B cell (primary cell): ENCODE measurements at regions of chr15 and their contacts with region 1.

Region 1: GRCh38 chr15:49046220-49047102 is at the start of gene SECISBP2L:
- DNase-seq: peak; percentile 96
- ATAC-seq: peak; percentile 96
- H3K4me3 ChIP-seq: peak within 1 kb of the TSS; percentile 78 to 98 (median 80)
- H3K4me3 Mint-ChIP-seq: peak within 1 kb of the TSS; percentile 95
- H3K27ac ChIP-seq: peak within 1 kb of the TSS; percentile 83 to 89
- H3K27ac Mint-ChIP-seq: peak within 1 kb of the TSS; percentile 98
- H3K4me1 ChIP-seq: peaks cover 12 to 19% of the 10 kb centered on the region in 2 donors
- H3K4me1 Mint-ChIP-seq: peaks cover 32% of the 10 kb centered on the region
- H3K27me3 ChIP-seq: no peaks in the 10 kb centered on the region
- H3K27me3 Mint-ChIP-seq: no peaks in the 10 kb centered on the region
- CTCF ChIP-seq: peak; percentile 45
- total RNA-seq, gene SECISBP2L: 117 and 121 TPM in 2 replicates

Region 2: DNA sequence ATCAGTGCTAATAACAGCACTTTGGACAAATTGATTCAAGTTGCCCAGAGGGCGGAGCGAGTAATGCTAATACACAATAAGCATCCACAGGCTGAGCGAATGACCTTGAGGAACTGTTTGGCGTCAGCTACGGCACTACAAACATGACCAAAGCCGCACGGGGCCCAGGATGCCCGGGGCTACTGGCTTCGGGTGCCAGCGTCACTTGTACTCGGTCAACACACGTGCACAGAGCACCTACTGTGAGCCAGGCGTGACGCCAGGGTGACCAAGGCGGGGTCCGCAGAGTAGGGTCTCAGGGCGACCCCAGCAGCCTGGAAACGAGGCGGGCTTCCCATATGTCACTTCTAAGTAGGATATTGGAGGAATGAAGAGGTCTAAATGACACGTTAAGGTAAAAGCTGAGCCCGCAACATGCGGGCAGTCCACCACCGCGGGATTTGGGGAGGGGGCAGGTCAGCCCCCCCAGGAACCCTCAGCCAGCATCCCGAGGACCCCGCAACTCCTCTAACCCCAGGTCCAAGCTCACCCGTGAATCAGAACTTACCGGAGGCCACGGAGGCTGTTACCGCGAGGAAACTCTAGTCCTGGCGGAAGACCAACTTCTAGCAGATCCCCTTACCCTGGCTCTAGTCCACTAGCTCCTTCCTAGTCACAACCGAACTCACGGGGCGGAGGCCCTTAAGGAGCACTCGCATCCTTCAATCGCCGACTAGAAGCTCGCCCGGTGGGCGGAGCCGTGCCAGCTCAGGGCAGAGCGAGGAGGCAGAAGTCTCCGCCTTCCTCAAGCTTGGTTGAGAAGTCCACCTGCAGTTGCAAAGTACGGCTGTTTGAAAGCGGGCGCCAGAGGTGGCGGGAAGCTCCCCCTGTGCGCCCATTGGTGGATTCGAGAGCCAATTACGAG is 235.8 kb before region 1 on chr15 and contains the start of gene CEP152:
- CTCF ChIA-PET with region 1: no interaction called
- POLR2A ChIA-PET with region 1: no interaction called
- intact Hi-C with region 1: loop called (anchors 1 kb)
- DNase-seq: peak; percentile 99
- ATAC-seq: peak; percentile 95
- H3K4me3 ChIP-seq: peak within 1 kb of the TSS; percentile 86 to 97 (median 94)
- H3K4me3 Mint-ChIP-seq: peak within 1 kb of the TSS; percentile 95
- H3K27ac ChIP-seq: peak within 1 kb of the TSS; percentile 74 to 76
- H3K27ac Mint-ChIP-seq: peak within 1 kb of the TSS; percentile 86
- H3K4me1 ChIP-seq: peaks cover 15 to 18% of the 10 kb centered on the region in 2 donors
- H3K4me1 Mint-ChIP-seq: peaks cover 30% of the 10 kb centered on the region
- H3K27me3 ChIP-seq: peaks cover 0 to 7% (median 0%) of the 10 kb centered on the region in 4 experiments
- H3K27me3 Mint-ChIP-seq: peaks cover 4% of the 10 kb centered on the region
- CTCF ChIP-seq: no peak
- total RNA-seq, gene CEP152: 18.0 and 18.1 TPM in 2 replicates

Region 3: DNA sequence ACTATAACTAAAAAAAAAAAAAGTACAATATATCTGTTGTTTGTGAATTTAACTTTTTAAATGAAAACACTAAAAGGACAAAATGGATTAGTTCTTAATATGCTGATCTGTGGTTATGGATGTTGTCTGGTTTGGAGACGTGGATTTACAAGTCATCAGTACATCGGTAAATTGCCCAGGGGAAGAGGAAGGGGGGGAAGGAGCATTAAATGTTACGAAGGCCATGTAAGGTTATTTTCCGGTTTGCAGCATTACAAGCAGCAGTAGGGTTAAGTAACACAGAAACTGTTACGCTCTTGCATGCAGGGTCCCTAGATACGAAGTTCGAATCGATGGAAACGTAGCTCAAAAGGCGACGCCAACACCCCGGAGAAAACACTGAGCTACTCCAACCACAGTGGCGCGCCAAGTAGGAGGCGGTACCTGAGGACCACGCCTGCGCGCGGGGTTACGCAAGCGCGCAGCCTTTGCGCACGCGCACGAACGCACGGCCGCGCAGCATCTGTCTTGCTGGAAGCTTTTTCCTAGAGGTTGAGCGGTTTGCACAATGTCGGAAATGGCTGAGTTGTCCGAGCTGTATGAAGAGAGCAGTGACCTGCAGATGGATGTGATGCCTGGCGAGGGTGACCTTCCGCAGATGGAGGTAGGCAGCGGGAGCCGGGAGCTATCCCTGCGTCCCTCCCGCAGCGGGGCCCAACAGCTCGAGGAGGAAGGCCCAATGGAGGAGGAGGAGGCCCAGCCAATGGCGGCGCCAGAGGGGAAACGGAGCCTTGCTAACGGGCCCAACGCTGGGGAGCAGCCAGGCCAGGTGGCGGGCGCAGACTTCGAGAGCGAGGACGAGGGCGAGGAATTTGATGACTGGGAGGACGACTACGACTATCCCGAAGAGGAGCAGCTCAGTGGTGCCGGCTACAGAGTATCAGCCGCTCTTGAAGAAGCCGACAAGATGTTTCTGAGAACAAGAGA is 168.5 kb before region 1 on chr15 and contains the start of gene EID1:
- CTCF ChIA-PET with region 1: interaction called, 4 read pairs
- POLR2A ChIA-PET with region 1: interaction called, 3 read pairs
- intact Hi-C with region 1: loop called (anchors 1 kb)
- DNase-seq: peak; percentile 95
- ATAC-seq: peak; percentile 95
- H3K4me3 ChIP-seq: peak within 1 kb of the TSS; percentile 56 to 91 (median 82)
- H3K4me3 Mint-ChIP-seq: peak within 1 kb of the TSS; percentile 100
- H3K27ac ChIP-seq: peak within 1 kb of the TSS; percentile 79 to 83
- H3K27ac Mint-ChIP-seq: peak within 1 kb of the TSS; percentile 99
- H3K4me1 ChIP-seq: peaks cover 0 to 12% of the 10 kb centered on the region in 2 donors
- H3K4me1 Mint-ChIP-seq: peaks cover 25% of the 10 kb centered on the region
- H3K27me3 ChIP-seq: peaks cover 0 to 4% (median 1%) of the 10 kb centered on the region in 4 experiments
- H3K27me3 Mint-ChIP-seq: peaks cover 8% of the 10 kb centered on the region
- CTCF ChIP-seq: no peak
- total RNA-seq, gene EID1: 56.5 and 62.7 TPM in 2 replicates

Region 4: GRCh38 chr15:49024840-49025239 is 21.6 kb before region 1 on chr15:
- CTCF ChIA-PET with region 1: no interaction called
- POLR2A ChIA-PET with region 1: no interaction called
- intact Hi-C with region 1: no loop called
- DNase-seq: no peak
- ATAC-seq: no peak
- H3K4me3 ChIP-seq: no peak overlapping the region
- H3K4me3 Mint-ChIP-seq: no peak overlapping the region
- H3K27ac ChIP-seq: no peak overlapping the region
- H3K27ac Mint-ChIP-seq: no peak overlapping the region
- H3K4me1 ChIP-seq: no peaks in the 10 kb centered on the region
- H3K4me1 Mint-ChIP-seq: no peaks in the 10 kb centered on the region
- H3K27me3 ChIP-seq: no peaks in the 10 kb centered on the region
- H3K27me3 Mint-ChIP-seq: no peaks in the 10 kb centered on the region
- CTCF ChIP-seq: no peak

Region 5: GRCh38 chr15:49145651-49146609 is 99.5 kb after region 1 on chr15:
- CTCF ChIA-PET with region 1: interaction called, 33 read pairs
- POLR2A ChIA-PET with region 1: no interaction called
- intact Hi-C with region 1: loop called (anchors 2 kb)
- DNase-seq: peak; percentile 53
- ATAC-seq: no peak
- H3K4me3 ChIP-seq: no peak overlapping the region
- H3K4me3 Mint-ChIP-seq: no peak overlapping the region
- H3K27ac ChIP-seq: peak overlapping the region in 1 of 2 donors; percentile 12
- H3K27ac Mint-ChIP-seq: no peak overlapping the region
- H3K4me1 ChIP-seq: peaks cover 5 to 14% of the 10 kb centered on the region in 2 donors
- H3K4me1 Mint-ChIP-seq: peaks cover 36% of the 10 kb centered on the region
- H3K27me3 ChIP-seq: no peaks in the 10 kb centered on the region
- H3K27me3 Mint-ChIP-seq: no peaks in the 10 kb centered on the region
- CTCF ChIP-seq: peak; percentile 70

Region 6: DNA sequence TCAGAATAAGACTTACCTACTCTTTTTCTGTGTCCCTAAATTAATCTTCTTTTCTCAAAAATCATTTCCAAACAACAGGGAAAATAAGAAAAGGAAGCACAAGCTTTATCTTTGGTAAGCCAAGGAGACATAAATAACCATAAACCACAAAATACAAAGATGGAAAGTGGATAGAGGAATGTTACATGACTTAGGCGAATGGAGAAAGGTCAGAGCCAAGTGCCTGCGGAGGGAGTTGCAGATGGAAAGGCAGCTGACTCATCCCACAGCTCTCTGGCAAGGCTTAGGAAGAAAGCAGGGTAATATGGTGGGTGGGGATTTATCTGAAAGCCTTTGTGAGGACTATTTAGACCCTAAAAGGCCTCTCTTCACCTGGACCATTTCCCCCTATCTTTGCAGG is 196.4 kb after region 1 on chr15:
- CTCF ChIA-PET with region 1: no interaction called
- POLR2A ChIA-PET with region 1: no interaction called
- intact Hi-C with region 1: no loop called
- DNase-seq: no peak
- ATAC-seq: no peak
- H3K4me3 ChIP-seq: no peak overlapping the region
- H3K4me3 Mint-ChIP-seq: no peak overlapping the region
- H3K27ac ChIP-seq: no peak overlapping the region
- H3K27ac Mint-ChIP-seq: no peak overlapping the region
- H3K4me1 ChIP-seq: no peaks in the 10 kb centered on the region
- H3K4me1 Mint-ChIP-seq: no peaks in the 10 kb centered on the region
- H3K27me3 ChIP-seq: no peaks in the 10 kb centered on the region
- H3K27me3 Mint-ChIP-seq: no peaks in the 10 kb centered on the region
- CTCF ChIP-seq: no peak

Region 7: GRCh38 chr15:49620658-49621368 is 574.4 kb after region 1 on chr15 and contains the starts of genes DTWD1 and FAM227B:
- CTCF ChIA-PET with region 1: no interaction called
- POLR2A ChIA-PET with region 1: no interaction called
- intact Hi-C with region 1: loop called (anchors 2 kb)
- DNase-seq: peak; percentile 96
- ATAC-seq: peak; percentile 98
- H3K4me3 ChIP-seq: peak within 1 kb of the TSS; percentile 75 to 91 (median 83)
- H3K4me3 Mint-ChIP-seq: peak within 1 kb of the TSS; percentile 93
- H3K27ac ChIP-seq: peak within 1 kb of the TSS; percentile 71 to 95
- H3K27ac Mint-ChIP-seq: peak within 1 kb of the TSS; percentile 96
- H3K4me1 ChIP-seq: peaks cover 11 to 18% of the 10 kb centered on the region in 2 donors
- H3K4me1 Mint-ChIP-seq: peaks cover 22% of the 10 kb centered on the region
- H3K27me3 ChIP-seq: no peaks in the 10 kb centered on the region
- H3K27me3 Mint-ChIP-seq: no peaks in the 10 kb centered on the region
- CTCF ChIP-seq: no peak
- total RNA-seq, gene DTWD1: 27.1 and 27.8 TPM in 2 replicates
- total RNA-seq, gene FAM227B: 8.9 and 9.2 TPM in 2 replicates

Region 8: DNA sequence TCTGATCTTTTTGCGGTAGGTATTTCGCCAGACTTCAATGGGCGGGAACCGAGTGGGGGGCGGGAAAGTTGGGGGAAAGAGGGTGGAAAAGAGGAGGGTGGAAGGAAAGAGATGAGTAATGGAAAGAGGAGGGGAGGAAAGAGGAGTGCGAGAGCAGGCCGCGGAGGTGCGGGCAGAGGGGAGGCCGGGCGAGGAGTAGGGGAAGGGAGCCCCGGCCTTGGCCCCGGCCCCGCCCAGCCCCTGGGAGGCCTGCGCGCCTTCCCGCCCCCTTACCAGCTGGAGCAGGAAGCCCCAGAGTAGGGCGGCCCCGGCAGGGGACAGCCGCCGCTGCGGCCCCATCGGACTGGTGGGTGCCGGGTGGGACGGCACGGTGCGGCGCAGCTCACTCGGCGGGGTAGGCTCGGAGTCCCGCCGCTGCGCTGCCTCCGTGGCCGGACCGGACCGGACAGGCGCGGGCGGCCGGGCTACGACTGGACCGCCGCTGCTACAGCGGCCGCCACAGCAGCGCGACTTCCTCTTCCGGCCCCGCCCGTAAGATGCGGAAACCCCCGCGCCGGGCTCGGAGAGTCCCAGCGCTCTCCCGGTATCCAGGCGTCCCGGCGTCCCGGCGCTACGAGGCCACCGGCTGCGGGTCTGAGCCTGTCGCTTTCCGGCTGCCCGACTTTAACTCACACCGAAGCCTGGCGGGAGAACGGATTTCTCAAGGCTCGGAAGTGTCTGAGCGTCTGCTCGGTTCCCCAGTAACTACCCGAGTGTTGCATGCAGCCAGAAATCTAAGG is 1718.9 kb after region 1 on chr15 and contains the start of gene SPPL2A:
- CTCF ChIA-PET with region 1: no interaction called
- POLR2A ChIA-PET with region 1: no interaction called
- intact Hi-C with region 1: loop called (anchors 2 kb)
- DNase-seq: peak; percentile 91
- ATAC-seq: peak; percentile 94
- H3K4me3 ChIP-seq: peak within 1 kb of the TSS; percentile 84 to 98 (median 93)
- H3K4me3 Mint-ChIP-seq: peak within 1 kb of the TSS; percentile 88
- H3K27ac ChIP-seq: peak within 1 kb of the TSS; percentile 91
- H3K27ac Mint-ChIP-seq: peak within 1 kb of the TSS; percentile 93
- H3K4me1 ChIP-seq: peaks cover 17 to 23% of the 10 kb centered on the region in 2 donors
- H3K4me1 Mint-ChIP-seq: peaks cover 39% of the 10 kb centered on the region
- H3K27me3 ChIP-seq: no peaks in the 10 kb centered on the region
- H3K27me3 Mint-ChIP-seq: no peaks in the 10 kb centered on the region
- CTCF ChIP-seq: no peak
- total RNA-seq, gene SPPL2A: 78.3 and 78.4 TPM in 2 replicates